ENCODE measurements at regions of chr3 and their contacts with region 1.

Region 1: GRCh38 chr3:156691920-156692319 is 17.5 kb downstream of the TIPARP start:
- DNase-seq: no peak
- ATAC-seq: no peak

Region 2: DNA sequence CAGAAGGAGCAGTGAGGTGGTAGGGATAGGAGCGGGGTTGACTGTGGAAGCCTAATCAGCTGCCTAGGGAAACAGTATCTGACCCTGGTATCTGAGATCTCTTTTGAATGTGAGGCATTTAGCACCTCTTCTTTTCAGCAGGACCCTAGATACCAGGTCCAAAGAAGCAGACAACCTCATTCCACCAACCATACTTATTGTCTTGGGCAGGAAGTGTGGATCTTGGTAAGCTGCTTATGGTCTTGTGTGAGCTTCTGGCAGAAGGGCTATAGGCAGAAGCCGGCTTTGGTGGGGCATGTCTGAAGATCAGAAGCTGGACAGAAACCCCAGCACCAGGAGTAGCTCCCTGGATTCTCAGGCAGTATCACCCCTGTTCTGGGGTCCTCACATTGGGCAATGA is 48.1 kb after region 1 on chr3:
- intact Hi-C with region 1: loop called (anchors 1 kb)
- DNase-seq: no peak
- ATAC-seq: no peak